ENCODE measurements at regions of chr13 and their contacts with region 1.

Region 1: DNA sequence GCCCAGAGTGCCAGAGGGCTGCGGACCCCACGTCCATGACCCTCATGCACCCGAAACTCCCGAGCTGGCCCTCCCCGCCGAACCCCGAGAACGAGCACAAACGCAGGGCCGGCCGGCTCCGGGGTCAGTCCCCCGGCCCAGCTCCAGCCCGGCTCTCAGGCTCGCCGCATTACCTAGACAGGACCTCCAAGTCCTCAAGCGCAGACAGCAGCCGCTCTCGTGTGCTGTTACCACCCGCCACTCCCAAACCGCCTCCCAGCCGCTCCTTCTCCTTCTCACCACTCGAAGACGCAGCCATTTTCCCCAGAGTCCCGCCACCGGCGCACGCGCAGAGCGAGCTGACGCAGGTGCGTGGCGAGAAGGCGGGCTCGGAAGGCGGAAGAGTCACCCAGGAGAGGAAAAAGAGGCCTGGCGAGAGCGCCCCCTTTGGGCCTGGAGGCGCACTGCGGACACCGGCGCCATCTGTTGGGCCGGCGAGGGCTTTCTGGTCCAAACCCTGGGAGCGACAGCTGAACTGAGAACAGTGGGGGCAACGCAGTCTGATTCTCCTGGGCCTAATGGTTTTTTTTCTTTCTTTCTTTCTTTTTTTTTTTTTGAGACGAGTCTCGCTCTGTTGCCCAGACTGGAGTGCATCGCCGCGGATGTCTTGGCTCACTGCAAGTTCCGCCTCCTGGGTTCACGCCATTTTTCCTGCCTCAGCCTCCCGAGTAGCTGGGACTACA is at the start of gene MED4:
- DNase-seq: peak; percentile 99
- ATAC-seq: peak; percentile 97
- H3K4me3 Mint-ChIP-seq: peak within 1 kb of the TSS; percentile 97
- H3K27ac Mint-ChIP-seq: peak within 1 kb of the TSS; percentile 96
- H3K4me1 Mint-ChIP-seq: peaks cover 31% of the 10 kb centered on the region
- H3K27me3 Mint-ChIP-seq: peaks cover 4% of the 10 kb centered on the region
- total RNA-seq, gene MED4: 56.1 TPM

Region 2: GRCh38 chr13:48037346-48038173 is 57.4 kb before region 1 on chr13 and contains the start of gene NUDT15:
- POLR2A ChIA-PET with region 1: interaction called, 16 read pairs
- DNase-seq: peak; percentile 97
- ATAC-seq: peak; percentile 91
- H3K4me3 Mint-ChIP-seq: peak within 1 kb of the TSS; percentile 92
- H3K27ac Mint-ChIP-seq: peak within 1 kb of the TSS; percentile 93
- H3K4me1 Mint-ChIP-seq: peaks cover 24% of the 10 kb centered on the region
- H3K27me3 Mint-ChIP-seq: no peaks in the 10 kb centered on the region
- total RNA-seq, gene NUDT15: 10.7 TPM